ENCODE measurements at regions of chr12 and their contacts with region 1.

Region 1: DNA sequence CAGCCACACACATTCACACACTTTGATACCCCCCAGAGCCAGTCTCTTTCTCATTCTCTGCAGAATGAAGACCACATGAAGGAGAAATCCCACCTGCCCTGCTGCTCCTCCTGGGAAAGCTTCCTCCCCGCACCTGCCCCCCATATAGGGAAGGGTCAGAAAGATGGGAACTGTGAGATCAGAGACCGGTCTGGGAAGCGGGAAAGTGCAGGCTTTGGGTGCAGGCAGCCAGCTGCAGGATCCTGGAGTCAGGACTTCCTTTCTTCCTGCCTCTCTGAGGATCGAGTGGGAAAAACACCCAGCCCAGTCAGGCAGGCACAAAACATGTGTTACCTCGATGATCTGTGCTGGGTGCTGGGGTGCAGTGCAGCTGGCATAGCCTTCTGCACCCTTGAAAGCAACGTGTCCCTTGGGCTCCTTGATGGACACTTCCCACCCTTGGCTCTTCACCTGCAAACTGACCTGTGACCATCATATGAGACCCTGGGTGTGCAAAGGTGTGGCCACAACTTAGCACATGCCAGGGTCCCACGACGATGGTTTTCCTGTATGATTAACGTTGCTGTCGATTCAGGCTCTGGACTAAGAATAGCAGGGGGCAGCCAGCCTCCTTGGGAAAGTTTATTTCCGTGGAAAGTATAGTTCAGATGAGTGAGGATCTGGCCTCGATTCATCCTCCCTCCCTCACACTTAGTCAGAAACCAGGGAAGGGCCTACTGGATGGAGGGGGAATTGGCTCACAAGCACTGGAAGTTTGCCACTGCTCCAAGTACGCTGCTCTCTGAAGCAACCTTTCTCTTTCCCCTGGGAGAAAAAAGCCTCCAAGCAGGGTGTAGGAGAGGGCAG is 105.4 kb upstream of the MED13L start:
- DNase-seq: peak; percentile 91

Region 2: DNA sequence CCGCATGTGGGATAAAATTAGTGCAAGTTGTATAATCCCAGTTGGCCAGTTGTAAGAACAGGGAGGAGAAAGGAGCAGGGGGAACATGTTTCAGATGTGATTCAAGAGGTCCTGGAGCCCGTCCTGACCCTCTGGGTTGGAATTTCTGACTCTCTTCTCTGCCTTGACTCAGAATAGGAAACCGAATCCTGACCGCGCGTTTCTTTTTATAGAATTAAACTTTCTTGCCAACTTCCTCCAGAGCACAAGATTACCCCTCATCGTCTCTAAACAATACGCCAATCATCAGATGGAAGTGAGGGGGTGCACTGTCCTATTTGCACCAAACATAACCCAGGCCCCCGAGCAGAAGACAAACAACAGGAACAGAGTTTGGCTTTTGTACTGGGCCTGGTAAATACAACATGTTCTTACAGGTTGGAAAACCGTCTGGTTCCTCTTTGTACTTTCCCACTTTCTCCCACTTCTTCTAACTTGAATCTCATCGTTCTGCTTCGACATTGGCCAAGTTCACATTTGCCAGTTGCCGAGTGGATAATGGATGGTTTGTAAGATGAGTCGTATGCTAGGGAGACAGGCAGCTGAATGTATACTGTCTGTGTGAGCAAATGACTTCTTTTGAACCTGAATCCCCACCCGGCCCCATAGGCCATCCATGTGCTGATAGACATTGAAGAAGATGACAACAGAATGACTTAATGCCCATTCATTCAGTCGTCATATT is 62.8 kb before region 1 on chr12:
- intact Hi-C with region 1: loop called in 1 of 2 experiments (anchors 10 kb)
- DNase-seq: peak; percentile 89

Region 3: GRCh38 chr12:116397148-116397547 is 14.2 kb after region 1 on chr12:
- intact Hi-C with region 1: no loop called
- DNase-seq: peak; percentile 12

Measured in posterior vena cava (tissue), 2 donors.